BJ (cell line): ENCODE measurements at regions of chr13 and their contacts with region 1.

Region 1: DNA sequence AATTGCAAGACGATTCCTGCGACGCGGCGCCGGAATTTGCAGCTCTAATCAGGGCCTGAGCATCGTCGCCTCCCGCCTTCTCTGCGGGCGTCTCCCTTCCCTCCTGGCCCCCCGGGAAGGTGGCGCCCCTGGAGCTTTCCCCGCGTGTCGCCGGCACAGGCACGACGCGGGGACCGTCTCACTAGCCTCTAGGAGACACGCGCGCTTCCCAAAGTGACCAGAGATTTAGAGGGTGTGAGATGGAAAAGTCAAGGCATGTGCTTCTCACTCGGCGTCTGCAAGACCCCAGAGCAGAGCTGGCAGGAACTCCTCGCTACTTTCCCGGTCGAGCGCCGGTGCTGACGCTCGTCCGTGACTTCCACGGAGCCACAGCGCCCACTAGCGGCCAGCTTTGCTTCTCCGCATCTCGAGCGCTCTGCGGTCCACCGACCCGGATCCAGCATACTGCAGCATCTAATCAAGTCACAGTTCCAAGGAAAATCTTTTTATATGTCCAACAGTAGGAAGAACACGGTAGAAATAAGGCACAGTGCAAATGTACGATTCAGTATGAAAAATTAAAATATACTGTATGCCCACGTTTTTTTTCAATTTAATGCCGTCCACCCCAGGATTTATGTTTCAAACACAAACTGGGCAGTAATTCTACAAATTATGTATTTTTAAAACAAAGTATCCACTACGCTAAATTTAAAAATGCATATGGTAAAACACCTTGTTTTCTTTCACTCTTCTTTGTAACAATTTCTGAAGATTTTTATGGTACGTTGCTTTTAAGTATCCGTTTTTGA is 977 bp upstream of the EFNB2 start:
- DNase-seq: no peak
- H3K4me3 ChIP-seq: peak overlapping the region; percentile 45
- H3K27me3 ChIP-seq: no peaks in the 10 kb centered on the region
- CTCF ChIP-seq: peak; percentile 97

Region 2: GRCh38 chr13:104571161-104571892 is 1965.1 kb before region 1 on chr13:
- CTCF ChIA-PET with region 1: interaction called, 16 read pairs
- POLR2A ChIA-PET with region 1: no interaction called
- DNase-seq: peak; percentile 60
- H3K4me3 ChIP-seq: no peak overlapping the region
- H3K27me3 ChIP-seq: no peaks in the 10 kb centered on the region
- CTCF ChIP-seq: peak; percentile 63

Region 3: DNA sequence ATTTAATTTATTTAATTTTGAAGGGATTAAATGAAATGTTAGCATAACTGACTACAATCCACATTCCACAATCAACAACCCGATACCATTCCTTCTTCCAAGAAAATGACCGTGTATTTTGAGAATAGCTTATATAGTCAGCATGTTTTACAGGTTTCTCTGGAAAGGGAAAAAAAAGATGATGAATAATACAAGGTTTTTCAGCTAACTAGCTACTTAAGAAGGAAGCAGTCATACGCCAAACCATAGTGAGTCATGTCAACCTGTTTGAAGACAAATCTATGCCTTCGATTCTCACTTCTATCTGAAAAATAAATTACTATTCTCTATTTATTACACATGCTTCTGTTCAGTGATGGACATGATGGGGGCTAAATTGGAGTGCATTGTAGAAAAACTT is 259.6 kb before region 1 on chr13:
- CTCF ChIA-PET with region 1: no interaction called
- POLR2A ChIA-PET with region 1: no interaction called
- DNase-seq: no peak
- H3K4me3 ChIP-seq: no peak overlapping the region
- H3K27me3 ChIP-seq: no peaks in the 10 kb centered on the region
- CTCF ChIP-seq: no peak

Region 4: DNA sequence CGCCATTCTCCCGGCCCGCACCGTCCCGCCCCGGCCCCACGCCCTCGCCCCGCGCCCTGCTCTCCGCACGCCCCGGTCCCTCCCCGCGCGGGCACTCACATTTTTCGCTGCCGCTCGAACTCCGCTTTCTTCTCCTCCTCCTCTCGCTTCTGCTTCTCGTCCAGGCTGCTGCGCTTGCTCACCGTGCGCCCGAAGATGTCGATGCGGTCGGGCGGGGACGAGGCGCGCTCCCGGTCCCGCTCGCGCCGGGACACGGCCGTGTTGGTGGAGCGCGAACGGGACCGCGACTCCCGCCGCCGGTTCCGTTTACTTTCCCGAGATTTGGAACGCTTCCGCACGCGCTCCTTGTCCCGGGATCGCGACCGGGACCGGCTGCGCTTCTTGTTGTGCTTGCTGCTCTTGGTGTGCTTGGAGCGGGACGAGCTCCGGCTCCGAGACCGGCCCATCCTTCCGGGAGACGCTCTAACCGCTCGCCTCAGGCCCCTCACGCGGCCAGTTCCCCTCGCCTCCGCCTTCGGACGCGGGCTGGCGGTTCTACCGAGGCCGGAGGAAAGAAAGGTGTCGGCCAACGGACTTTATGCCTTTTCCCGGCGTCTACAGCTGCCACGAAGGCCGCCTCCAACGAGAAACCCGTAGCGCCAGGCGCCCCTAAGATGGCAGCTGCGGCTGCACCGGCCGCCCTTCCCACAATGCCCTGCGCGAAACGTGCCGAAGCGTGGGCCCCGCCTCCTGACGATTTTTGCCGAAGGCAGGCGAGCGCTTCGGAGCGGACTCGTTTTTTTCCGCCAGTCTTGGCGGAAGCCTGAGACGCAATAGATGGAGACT is 31.2 kb after region 1 on chr13 and contains the start of gene ARGLU1:
- CTCF ChIA-PET with region 1: interaction called, 7 read pairs
- POLR2A ChIA-PET with region 1: interaction called, 42 read pairs
- DNase-seq: peak; percentile 52
- H3K4me3 ChIP-seq: peak within 1 kb of the TSS; percentile 95
- H3K27me3 ChIP-seq: no peaks in the 10 kb centered on the region
- CTCF ChIP-seq: no peak
- polyA plus RNA-seq, gene ARGLU1: 25.6 and 46.3 TPM in 2 replicates

Region 5: DNA sequence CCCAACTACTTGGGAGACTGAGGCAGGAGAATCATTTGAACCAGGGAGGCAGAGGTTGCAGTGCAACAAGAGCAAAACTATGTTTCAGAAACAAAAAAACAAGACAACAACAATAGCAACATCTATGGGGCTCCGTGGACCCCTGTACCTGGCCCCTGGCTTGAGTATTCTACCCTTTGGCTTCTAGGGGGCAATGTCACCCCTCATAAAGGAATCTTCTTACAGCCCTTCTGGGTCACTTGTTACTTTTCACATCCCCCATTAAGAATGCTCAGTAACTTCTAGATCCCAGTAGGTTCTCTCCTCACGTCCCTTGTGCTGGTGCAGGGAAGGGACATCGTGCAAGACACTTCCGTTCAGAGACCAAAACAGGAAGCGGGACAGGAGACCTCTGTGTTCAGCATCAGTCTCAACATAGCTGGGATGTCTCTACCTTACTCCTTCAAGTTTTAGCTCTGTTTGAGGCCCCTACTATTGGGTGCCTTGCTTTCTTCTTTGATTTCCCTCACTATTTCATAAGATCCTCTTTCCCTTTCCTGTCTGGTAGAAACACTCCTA is 249.6 kb after region 1 on chr13:
- CTCF ChIA-PET with region 1: no interaction called
- POLR2A ChIA-PET with region 1: no interaction called
- DNase-seq: no peak
- H3K4me3 ChIP-seq: no peak overlapping the region
- H3K27me3 ChIP-seq: no peaks in the 10 kb centered on the region
- CTCF ChIP-seq: no peak